Aorta (tissue), 5 donors: ENCODE measurements at regions of chr1 and their contacts with region 1.

Region 1: GRCh38 chr1:18956369-18957135 is at the start of gene IFFO2:
- DNase-seq: peak; percentile 99 to 100
- ATAC-seq: peak; percentile 97
- H3K4me3 ChIP-seq: peak within 1 kb of the TSS; percentile 98
- H3K27ac ChIP-seq: peak within 1 kb of the TSS; percentile 15 to 58
- H3K4me1 ChIP-seq: no peaks in the 10 kb centered on the region
- H3K27me3 ChIP-seq: no peaks in the 10 kb centered on the region
- total RNA-seq, gene IFFO2: 21.5 to 34.7 TPM

Region 2: GRCh38 chr1:18913065-18913835 is 43.3 kb before region 1 on chr1:
- intact Hi-C with region 1: loop called (anchors 2 to 5 kb)
- DNase-seq: peak; percentile 84 to 94
- ATAC-seq: peak; percentile 73
- H3K4me3 ChIP-seq: no peak overlapping the region
- H3K27ac ChIP-seq: peak overlapping the region in 1 of 2 donors; percentile 33
- H3K4me1 ChIP-seq: no peaks in the 10 kb centered on the region
- H3K27me3 ChIP-seq: no peaks in the 10 kb centered on the region

Region 3: DNA sequence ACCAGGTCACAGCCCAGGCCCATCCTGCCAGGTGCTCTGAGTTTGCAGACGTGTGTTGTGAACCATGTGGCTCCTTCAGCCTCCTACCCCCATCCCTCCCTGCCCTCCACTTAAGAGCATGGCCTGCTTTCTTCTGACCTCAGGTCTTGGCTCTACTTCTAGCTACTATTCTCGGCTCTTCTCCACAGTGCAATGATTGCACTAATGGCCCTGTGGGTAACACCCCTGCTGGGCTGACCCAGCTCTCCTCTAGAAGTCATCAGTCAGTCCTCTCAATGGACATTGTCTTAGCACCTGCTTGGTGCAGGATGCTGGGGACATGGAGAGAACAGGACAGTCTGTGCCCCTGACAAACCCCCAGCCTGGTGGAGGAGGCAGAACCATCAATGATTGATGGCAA is 22.2 kb after region 1 on chr1:
- intact Hi-C with region 1: no loop called
- DNase-seq: no peak
- ATAC-seq: no peak
- H3K4me3 ChIP-seq: no peak overlapping the region
- H3K27ac ChIP-seq: no peak overlapping the region
- H3K4me1 ChIP-seq: no peaks in the 10 kb centered on the region
- H3K27me3 ChIP-seq: no peaks in the 10 kb centered on the region

Region 4: DNA sequence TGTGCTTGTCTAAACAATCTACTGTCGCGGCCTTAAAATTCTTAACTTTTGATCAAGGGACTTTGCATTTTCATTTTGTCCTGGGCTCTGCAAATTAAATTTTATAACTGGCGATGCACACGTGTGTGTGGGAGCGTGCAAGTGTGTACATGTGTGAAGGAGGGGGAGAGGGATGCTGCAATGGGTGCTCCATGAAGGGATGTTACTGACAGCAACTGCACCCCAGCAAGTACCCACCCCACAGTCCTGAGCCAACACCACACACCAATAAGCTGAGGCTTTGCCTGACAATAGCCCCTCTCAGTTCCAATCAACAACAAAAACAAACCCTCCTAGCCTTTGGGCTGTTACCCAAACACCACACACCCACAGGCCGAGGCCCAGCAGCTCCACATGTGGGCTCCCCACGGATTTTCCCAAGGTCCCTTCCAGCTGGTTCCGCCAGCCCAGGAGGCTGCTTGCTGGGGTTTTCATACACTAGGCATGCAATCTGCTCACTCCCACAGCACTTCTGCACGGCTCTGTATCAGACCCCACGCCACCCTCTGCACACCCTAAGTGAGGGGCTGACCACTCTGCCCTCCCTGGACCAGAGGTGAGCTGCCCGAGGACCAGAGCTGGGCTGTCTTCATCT is 32.7 kb after region 1 on chr1:
- intact Hi-C with region 1: no loop called
- DNase-seq: no peak
- ATAC-seq: no peak
- H3K4me3 ChIP-seq: no peak overlapping the region
- H3K27ac ChIP-seq: no peak overlapping the region
- H3K4me1 ChIP-seq: no peaks in the 10 kb centered on the region
- H3K27me3 ChIP-seq: no peaks in the 10 kb centered on the region

Region 5: DNA sequence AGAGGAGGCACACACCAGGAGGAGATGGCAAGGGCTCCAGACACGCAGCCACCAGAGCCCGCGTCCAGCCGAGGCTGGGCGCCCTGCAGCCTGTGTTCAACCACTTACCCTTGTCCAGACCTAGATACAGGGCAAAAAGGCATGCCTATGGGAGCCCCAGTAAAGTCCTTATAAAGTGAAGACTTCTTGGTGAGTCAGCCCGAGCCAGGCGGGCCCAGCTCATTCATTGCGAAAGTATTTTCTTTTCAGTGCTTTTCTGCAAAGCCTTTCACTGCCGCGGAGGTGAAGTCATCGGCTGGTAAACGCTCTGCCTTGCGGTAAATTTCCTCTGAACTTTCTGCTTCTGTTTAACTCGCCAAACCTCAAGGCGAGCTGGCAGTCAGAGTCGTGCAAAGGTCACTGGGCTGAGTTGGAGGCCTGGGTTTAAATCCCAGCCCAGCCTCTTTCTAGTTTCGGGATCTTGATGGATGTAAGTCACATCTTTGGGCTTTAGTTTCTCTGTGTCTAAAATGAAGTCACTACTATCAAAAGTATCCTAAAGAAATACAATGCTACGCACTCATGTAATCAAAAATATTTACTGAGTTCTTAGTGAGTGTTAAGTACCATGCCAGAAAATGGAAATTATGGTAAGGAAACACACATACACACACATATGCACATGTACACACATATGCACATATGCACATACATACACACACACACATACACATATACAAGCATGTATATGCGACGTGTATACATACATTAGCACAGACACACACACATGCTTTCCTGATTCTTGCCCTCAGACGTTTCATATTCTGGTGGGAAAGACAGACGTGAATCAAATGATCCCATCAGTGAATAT is 54.7 kb after region 1 on chr1:
- intact Hi-C with region 1: loop called (anchors 1 to 5 kb)
- DNase-seq: peak; percentile 93
- ATAC-seq: peak; percentile 90
- H3K4me3 ChIP-seq: no peak overlapping the region
- H3K27ac ChIP-seq: peak overlapping the region; percentile 72 to 95
- H3K4me1 ChIP-seq: peaks cover 2 to 4% of the 10 kb centered on the region in 2 donors
- H3K27me3 ChIP-seq: no peaks in the 10 kb centered on the region